Activated CD4-positive, alpha-beta memory T cell treated with anti-CD3 and anti-CD28 coated beads for 36 hours (primary cell): ENCODE measurements at regions of chr13 and their contacts with region 1.

Region 1: DNA sequence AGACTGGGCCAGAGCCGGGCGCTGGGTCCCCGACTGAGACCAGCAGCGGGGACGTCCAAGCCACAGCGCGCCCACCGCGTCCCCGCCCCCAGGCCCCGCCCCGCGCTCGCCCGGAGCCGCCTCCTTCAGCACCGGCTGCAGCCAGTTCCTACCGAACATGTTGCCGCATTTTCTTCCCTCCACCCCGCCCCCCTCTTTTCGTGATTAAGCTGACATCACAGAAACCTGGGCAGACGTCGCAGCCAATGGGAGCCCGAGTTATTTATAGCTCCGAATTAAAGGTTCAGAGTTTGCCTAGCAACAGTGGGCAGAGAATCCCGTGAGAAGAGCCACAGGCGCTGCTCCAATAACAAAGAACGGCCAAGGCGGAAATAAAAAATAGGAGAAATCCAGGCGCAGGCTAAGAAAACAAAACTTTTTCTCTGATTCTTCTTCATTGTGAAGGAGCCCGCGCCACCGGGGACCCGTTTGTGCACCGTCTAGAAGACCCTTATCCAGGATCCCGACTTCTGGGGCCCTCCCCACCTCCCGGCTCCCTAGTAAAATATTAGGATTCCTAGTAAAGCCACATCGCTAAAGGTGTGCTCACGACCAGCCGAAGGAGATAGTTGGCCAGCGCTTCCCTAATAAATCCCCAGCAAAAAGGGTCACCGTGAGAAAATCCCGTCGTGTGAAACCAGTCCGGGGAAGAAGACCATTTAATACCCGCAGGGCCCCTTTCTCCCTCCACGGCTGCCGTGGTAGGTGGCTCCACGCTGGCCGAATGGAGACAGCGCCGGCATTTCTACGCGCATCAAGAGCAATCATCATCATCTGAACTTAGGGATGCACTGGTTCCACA is 61.7 kb downstream of the SERP2 start:
- DNase-seq: peak; percentile 93
- H3K4me3 Mint-ChIP-seq: peak overlapping the region; percentile 64
- H3K27ac Mint-ChIP-seq: peak overlapping the region; percentile 39
- H3K4me1 Mint-ChIP-seq: peaks cover 17% of the 10 kb centered on the region
- H3K27me3 Mint-ChIP-seq: peaks cover 9% of the 10 kb centered on the region

Region 2: DNA sequence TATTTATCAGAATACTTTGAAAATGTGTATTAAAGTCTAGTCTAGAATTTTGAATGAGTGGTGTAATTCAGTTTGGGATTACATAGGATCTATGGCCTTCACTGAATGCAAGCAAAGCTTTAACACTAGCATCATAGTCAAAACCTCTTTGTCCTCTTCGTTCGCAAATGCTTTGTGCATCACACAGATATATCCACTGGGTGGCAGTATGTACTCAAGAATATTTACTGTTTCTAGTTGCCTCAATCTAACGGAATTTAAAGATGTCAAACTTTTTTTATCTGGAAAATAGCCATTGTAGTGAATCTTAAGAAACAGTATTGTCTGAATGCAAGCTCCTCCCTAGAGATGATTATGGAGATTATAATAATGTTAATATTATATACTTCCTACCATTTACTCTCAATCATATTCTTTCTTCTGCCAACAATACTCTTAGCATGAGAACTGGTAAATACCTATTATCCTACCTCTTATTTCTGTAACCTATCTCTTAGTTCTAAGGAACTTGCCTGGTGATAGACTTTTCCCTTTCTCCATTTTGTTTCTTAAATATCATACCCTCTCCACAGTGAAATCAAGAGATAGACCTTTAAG is 529.8 kb before region 1 on chr13:
- CTCF ChIA-PET with region 1: interaction called, 118 read pairs
- POLR2A ChIA-PET with region 1: no interaction called
- intact Hi-C with region 1: loop called (anchors 1 kb)
- DNase-seq: peak; percentile 9
- H3K4me3 Mint-ChIP-seq: no peak overlapping the region
- H3K27ac Mint-ChIP-seq: no peak overlapping the region
- H3K4me1 Mint-ChIP-seq: peaks cover 3% of the 10 kb centered on the region
- H3K27me3 Mint-ChIP-seq: peaks cover 9% of the 10 kb centered on the region

Region 3: DNA sequence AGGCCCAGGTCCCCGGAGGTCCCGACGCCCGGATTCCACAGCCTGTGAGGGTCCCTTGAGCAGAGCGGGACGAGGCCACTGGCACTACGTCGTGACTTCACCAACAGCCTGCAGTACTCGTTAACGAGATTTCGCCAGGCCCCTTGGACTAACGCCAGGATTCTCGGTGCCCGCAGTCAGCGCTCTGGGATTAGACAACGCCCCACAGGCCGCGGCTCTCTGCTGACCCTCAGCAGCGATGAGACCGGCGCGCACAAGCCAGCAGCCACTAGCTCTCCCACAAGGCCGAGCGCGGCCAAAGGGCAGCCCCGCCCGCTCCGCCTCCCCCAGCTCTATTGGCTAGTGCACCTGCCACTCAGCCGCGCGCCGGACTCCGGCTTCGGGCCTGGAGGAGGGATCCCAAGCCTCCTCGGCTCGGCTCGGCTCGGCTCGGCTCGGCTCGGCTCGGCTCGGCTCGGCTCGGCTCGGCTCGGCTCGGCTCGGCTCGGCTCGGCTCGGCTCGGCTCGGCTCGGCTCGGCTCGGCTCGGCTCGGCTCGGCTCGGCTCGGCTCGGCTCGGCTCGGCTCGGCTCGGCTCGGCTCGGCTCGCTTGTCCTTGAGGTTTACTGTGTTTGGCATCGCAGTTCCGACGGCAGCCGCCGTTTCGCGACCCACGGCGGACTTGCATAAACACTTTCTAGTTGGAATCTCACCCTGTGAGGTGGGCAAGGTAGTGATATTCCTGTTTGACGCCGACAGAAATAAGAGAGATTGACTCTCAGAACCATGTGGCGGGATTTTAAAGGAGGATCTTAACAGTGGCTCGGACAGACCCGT is 293.4 kb before region 1 on chr13:
- CTCF ChIA-PET with region 1: interaction called, 3 read pairs
- POLR2A ChIA-PET with region 1: interaction called, 3 read pairs
- intact Hi-C with region 1: loop called (anchors 1 kb)
- DNase-seq: peak; percentile 96
- H3K4me3 Mint-ChIP-seq: peak overlapping the region; percentile 85
- H3K27ac Mint-ChIP-seq: peak overlapping the region; percentile 75
- H3K4me1 Mint-ChIP-seq: peaks cover 12% of the 10 kb centered on the region
- H3K27me3 Mint-ChIP-seq: peaks cover 2% of the 10 kb centered on the region

Region 4: GRCh38 chr13:44197791-44198770 is 237.3 kb before region 1 on chr13:
- CTCF ChIA-PET with region 1: no interaction called
- POLR2A ChIA-PET with region 1: no interaction called
- intact Hi-C with region 1: loop called (anchors 1 kb)
- DNase-seq: peak; percentile 60
- H3K4me3 Mint-ChIP-seq: no peak overlapping the region
- H3K27ac Mint-ChIP-seq: no peak overlapping the region
- H3K4me1 Mint-ChIP-seq: peaks cover 34% of the 10 kb centered on the region
- H3K27me3 Mint-ChIP-seq: peaks cover 16% of the 10 kb centered on the region

Region 5: GRCh38 chr13:44259045-44260027 is 176.0 kb before region 1 on chr13:
- CTCF ChIA-PET with region 1: interaction called, 5 read pairs
- POLR2A ChIA-PET with region 1: no interaction called
- intact Hi-C with region 1: loop called (anchors 1 kb)
- DNase-seq: peak; percentile 88
- H3K4me3 Mint-ChIP-seq: peak overlapping the region; percentile 45
- H3K27ac Mint-ChIP-seq: peak overlapping the region; percentile 72
- H3K4me1 Mint-ChIP-seq: peaks cover 20% of the 10 kb centered on the region
- H3K27me3 Mint-ChIP-seq: peaks cover 9% of the 10 kb centered on the region

Region 6: DNA sequence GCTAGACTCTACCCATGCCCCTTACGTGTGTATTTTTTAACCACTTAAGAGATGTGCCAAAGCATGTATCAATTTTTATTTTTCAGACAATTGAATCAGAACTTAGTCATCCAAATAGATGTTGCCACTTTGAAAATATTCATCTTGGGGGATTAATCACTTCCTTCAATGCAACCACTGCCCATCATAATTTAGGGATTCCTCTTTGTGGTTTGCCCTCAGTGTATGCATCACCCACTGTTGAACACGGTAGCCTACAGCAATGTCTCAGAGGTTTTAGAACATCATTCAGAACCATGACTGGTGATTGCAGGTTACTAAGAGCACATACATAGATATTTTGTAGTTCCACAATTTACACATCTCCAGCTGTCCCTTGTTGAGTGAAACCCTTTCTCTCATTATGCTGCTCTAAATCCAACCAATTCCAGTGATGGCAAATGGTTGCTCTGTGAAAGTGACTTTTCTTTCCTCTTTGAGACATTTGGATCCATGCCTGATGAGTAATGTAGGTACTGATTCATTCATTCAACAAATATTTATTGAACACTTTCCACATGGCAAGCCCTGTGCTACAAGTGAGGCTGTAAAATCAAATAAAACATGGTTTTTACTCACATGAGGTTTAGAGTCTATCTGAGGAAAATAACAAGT is 122.3 kb before region 1 on chr13:
- CTCF ChIA-PET with region 1: no interaction called
- POLR2A ChIA-PET with region 1: no interaction called
- intact Hi-C with region 1: loop called (anchors 2 kb)
- DNase-seq: peak; percentile 35
- H3K4me3 Mint-ChIP-seq: no peak overlapping the region
- H3K27ac Mint-ChIP-seq: no peak overlapping the region
- H3K4me1 Mint-ChIP-seq: peaks cover 11% of the 10 kb centered on the region
- H3K27me3 Mint-ChIP-seq: peaks cover 38% of the 10 kb centered on the region

Region 7: GRCh38 chr13:44323754-44324153 is 111.6 kb before region 1 on chr13:
- CTCF ChIA-PET with region 1: no interaction called
- POLR2A ChIA-PET with region 1: no interaction called
- intact Hi-C with region 1: no loop called
- DNase-seq: no peak
- H3K4me3 Mint-ChIP-seq: no peak overlapping the region
- H3K27ac Mint-ChIP-seq: no peak overlapping the region
- H3K4me1 Mint-ChIP-seq: no peaks in the 10 kb centered on the region
- H3K27me3 Mint-ChIP-seq: peaks cover 13% of the 10 kb centered on the region